BJ (cell line): ENCODE measurements at regions of chr6 and their contacts with region 1.

Region 1: DNA sequence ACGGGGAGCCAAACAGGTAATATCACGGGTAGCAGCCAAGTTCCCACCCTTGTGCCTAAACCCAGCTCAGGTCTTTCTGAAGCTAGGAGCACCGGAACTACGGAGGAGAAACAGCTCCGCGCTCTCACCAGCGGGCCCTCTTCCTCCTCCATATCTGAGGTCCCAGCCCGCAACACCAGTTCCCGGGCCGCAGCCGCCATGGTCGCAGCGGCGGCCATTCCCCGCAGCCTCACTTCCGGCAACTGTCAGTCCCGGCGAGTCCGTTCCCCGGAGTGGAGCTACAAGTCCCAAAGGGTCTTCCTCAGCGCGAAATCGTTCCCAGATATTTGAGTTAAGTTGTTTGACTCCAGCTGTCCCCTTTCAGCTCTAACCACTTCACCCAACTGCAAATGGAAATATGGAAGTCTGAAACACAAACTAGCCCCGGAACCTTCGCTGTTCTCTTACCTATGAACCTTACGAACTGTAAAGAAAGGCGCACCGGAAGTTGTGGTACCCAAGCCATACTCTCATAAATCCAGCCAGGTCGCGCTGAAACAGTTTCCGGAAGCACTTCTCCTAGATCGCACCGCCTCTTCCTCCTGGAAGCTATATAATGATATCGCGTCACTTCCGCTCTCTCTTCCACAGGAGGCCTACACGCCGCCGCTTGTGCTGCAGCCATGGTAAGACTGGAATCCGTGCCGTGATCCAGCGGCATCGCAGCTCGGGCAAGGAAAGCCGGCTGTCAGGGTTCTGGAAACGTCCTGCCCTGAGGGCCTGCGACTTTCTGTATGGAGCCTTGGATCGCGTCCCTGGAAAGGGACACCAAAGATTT is at the starts of genes RPS18 and VPS52:
- DNase-seq: peak; percentile 92
- H3K4me3 ChIP-seq: peak within 1 kb of the TSS; percentile 66
- H3K27me3 ChIP-seq: no peaks in the 10 kb centered on the region
- CTCF ChIP-seq: no peak
- polyA plus RNA-seq, gene RPS18: 6,221 and 6,433 TPM in 2 replicates
- polyA plus RNA-seq, gene VPS52: 63.2 and 89.8 TPM in 2 replicates

Region 2: DNA sequence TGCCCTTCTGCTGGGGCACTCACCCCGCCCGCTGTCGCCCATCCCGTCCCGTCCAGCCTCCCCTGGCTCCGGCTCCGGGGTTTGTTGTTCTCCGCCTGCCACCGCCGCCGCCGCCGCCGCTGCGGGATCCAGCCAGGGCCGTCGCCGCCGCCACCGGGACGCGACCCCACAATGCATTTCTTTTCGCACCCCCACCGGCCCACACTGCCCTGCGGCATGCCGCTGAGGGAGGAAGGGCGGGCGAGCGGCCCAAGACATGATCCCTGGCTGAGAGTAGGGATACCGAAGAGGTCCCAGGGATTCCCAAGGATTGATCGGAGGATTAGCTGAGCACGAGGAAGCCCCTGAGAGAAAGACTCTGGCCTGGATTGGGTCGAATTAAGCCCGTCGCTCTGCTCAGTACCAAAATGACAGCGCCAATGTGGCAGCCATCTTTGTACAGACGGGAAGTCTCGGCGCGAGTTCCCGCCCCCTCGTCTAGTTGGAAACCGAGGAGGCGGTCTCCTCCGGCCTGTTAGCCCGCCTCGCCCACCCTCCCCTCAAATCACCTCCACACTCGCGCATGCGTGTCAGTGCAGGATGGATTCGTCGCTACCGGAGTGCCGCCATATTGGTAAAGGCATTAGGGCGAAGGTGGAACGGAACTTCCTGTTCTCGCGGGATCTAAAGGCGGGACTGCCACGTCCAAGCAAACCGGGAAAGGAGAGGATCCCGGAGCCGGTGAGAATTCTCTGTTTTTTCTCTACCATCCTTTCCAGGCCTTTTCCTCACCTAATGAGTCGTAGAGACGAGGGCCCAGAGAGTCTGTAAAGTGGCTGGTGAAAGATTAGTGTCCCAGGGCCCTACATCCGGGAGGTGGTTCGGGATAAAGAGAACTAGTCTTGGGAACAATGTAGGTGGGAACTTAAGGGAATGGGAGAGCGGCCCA is 71.2 kb before region 1 on chr6 and contains the starts of genes RXRB and SLC39A7:
- CTCF ChIA-PET with region 1: interaction called, 4 read pairs
- POLR2A ChIA-PET with region 1: interaction called, 10 read pairs
- DNase-seq: peak; percentile 96
- H3K4me3 ChIP-seq: peak within 1 kb of the TSS; percentile 78
- H3K27me3 ChIP-seq: no peaks in the 10 kb centered on the region
- CTCF ChIP-seq: no peak
- polyA plus RNA-seq, gene RXRB: 51.3 and 67.9 TPM in 2 replicates
- polyA plus RNA-seq, gene SLC39A7: 116 and 151 TPM in 2 replicates